Activated CD4-positive, alpha-beta T cell treated with anti-CD3 and anti-CD28 coated beads for 36 hours (primary cell): ENCODE measurements at regions of chr4 and their contacts with region 1.

Region 1: GRCh38 chr4:153497988-153498967 is 32.1 kb downstream of the TMEM131L start:
- DNase-seq: no peak
- ATAC-seq: peak; percentile 14
- H3K4me3 Mint-ChIP-seq: peak overlapping the region; percentile 75
- H3K27ac Mint-ChIP-seq: peak overlapping the region; percentile 99
- H3K4me1 Mint-ChIP-seq: peaks cover 95% of the 10 kb centered on the region
- H3K27me3 Mint-ChIP-seq: no peaks in the 10 kb centered on the region

Region 2: DNA sequence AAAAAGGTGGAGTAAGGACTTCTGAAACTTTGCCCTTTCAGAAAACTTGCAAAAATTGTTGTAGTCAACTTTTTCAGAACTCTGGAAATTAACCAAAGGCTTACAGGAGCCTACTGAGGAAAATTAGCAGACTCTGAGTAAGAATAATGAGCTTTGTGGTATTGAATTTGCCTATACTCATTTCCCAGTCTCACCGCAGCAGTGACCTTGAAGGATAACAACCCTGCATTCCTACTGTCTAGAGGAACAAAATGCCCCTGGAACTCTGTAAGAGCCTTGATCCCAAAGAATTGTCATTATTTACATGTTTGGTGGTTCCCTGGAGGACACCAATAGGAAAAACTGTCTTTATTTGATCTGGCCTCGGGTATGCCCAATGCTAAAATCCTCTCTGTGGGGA is 95.9 kb before region 1 on chr4:
- CTCF ChIA-PET with region 1: no interaction called
- POLR2A ChIA-PET with region 1: no interaction called
- intact Hi-C with region 1: no loop called
- DNase-seq: no peak
- ATAC-seq: no peak
- H3K4me3 Mint-ChIP-seq: no peak overlapping the region
- H3K27ac Mint-ChIP-seq: no peak overlapping the region
- H3K4me1 Mint-ChIP-seq: peaks cover 18% of the 10 kb centered on the region
- H3K27me3 Mint-ChIP-seq: no peaks in the 10 kb centered on the region

Region 3: GRCh38 chr4:153514001-153514526 is 15.8 kb after region 1 on chr4:
- CTCF ChIA-PET with region 1: interaction called, 14 read pairs
- POLR2A ChIA-PET with region 1: interaction called, 7 read pairs
- intact Hi-C with region 1: loop called in 1 of 2 experiments (anchors 2 kb)
- DNase-seq: no peak
- ATAC-seq: no peak
- H3K4me3 Mint-ChIP-seq: no peak overlapping the region
- H3K27ac Mint-ChIP-seq: peak overlapping the region; percentile 90
- H3K4me1 Mint-ChIP-seq: peaks cover 77% of the 10 kb centered on the region
- H3K27me3 Mint-ChIP-seq: no peaks in the 10 kb centered on the region

Region 4: GRCh38 chr4:153521999-153522801 is 23.9 kb after region 1 on chr4:
- CTCF ChIA-PET with region 1: interaction called, 5 read pairs
- POLR2A ChIA-PET with region 1: interaction called, 25 read pairs
- intact Hi-C with region 1: loop called (anchors 1 to 2 kb)
- DNase-seq: peak; percentile 83
- ATAC-seq: peak; percentile 79
- H3K4me3 Mint-ChIP-seq: peak overlapping the region; percentile 61
- H3K27ac Mint-ChIP-seq: peak overlapping the region; percentile 98
- H3K4me1 Mint-ChIP-seq: peaks cover 95% of the 10 kb centered on the region
- H3K27me3 Mint-ChIP-seq: no peaks in the 10 kb centered on the region

Region 5: DNA sequence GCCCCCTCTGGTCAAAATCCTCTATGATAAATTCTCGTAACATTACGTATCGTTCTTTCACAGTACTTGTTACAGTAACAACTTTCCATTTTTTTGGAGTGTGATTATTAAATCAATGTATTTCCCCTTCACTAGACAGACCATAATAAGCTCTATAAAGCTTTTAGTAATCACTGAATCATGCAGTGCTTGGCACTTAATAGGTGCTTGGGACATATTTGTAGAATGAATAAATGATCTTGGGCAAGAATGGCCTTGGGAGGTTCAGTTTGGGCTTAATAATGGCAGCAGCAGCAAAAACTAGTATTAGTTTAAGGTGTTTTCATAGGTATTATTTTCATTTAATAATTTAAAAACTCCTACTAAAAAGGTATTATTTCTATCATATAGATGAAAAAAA is 324.0 kb after region 1 on chr4:
- CTCF ChIA-PET with region 1: no interaction called
- POLR2A ChIA-PET with region 1: no interaction called
- intact Hi-C with region 1: no loop called
- DNase-seq: no peak
- ATAC-seq: no peak
- H3K4me3 Mint-ChIP-seq: no peak overlapping the region
- H3K27ac Mint-ChIP-seq: no peak overlapping the region
- H3K4me1 Mint-ChIP-seq: no peaks in the 10 kb centered on the region
- H3K27me3 Mint-ChIP-seq: peaks cover 11% of the 10 kb centered on the region